GM18951 (cell line): ENCODE measurements at regions of chr6 and their contacts with region 1.

Region 1: DNA sequence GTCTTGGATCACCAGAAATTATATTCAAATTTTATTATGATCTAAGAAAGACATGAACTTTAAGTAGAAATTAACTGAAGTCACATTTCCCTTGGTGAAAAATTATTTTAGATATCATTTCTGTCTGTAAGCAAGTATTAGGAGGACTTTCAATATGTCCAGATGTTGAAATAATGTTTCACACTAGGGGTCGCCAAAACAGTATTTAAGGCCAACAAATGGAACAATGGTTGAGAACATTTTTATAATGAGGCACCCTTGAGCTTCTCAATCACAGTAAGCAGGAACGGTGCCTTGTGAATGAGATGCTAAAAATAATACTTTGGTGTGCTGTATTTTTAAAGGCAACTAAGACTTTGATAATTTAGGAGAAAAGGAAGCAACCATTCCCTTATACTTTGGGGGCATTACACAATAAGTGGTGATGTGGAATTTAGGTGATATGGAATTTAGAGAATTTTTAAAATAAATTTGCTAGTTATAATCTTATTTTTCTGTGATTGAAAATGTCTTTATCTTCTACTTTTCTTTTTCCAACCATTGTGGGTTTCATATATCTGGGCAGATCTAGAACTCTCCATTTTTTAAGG is 9.6 kb upstream of the SF3B5 start:
- POLR2A ChIP-seq: no peak

Region 2: DNA sequence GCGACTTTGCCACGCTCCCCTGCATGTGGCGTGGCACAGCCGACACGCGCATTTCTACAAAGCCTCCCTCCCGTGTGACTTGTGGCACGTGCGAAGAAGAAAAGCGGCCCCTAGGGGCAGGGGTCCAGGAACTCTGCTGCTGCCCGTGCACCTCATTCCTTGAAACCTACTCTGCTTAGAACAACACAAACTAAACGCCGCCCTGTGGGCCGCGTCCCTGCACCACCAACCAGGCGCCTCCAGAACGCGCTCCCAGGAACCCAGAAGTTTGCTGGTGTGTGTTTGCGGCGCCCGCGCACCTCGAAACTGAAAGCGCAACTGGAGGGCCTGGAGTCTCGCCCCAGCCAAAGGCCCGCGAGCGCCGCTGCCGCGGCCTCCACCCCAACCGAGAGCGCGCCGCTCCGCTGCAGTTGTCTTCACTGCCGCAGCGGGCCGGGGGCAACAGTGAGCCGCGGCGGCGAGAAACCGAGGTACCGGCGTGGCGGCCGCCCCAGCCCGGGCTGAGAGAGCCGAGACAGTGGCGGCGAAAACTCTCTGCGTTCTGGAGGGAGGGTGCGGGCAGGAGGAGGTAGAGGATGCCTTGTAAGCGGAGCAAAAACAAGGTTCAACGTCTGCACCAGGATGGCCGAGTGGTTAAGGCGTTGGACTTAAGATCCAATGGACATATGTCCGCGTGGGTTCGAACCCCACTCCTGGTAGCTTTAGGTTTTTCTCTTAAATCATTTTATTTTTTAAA is 111.1 kb after region 1 on chr6:
- in situ Hi-C with region 1: loop called (anchors 5 kb)
- POLR2A ChIP-seq: peak; percentile 68

Region 3: GRCh38 chr6:144482142-144482541 is 377.1 kb after region 1 on chr6:
- in situ Hi-C with region 1: loop called (anchors 10 kb)
- POLR2A ChIP-seq: no peak